Natural killer cell (primary cell): ENCODE measurements at regions of chr1 and their contacts with region 1.

Region 1: GRCh38 chr1:26787706-26788514 is at the start of gene PIGV:
- DNase-seq: peak; percentile 90 to 95
- ATAC-seq: peak; percentile 65 to 87 (median 70)
- H3K4me3 ChIP-seq: peak within 1 kb of the TSS; percentile 79
- H3K4me3 Mint-ChIP-seq: peak within 1 kb of the TSS; percentile 100
- H3K27ac ChIP-seq: peak within 1 kb of the TSS; percentile 96
- H3K27ac Mint-ChIP-seq: peak within 1 kb of the TSS; percentile 100
- H3K4me1 ChIP-seq: peaks cover 63% of the 10 kb centered on the region
- H3K4me1 Mint-ChIP-seq: peaks cover 74 to 84% of the 10 kb centered on the region in 2 donors
- H3K27me3 ChIP-seq: no peaks in the 10 kb centered on the region
- H3K27me3 Mint-ChIP-seq: no peaks in the 10 kb centered on the region
- CTCF ChIP-seq: no peak
- total RNA-seq, gene PIGV: 23.1 to 35.2 (median 30.3) TPM

Region 2: DNA sequence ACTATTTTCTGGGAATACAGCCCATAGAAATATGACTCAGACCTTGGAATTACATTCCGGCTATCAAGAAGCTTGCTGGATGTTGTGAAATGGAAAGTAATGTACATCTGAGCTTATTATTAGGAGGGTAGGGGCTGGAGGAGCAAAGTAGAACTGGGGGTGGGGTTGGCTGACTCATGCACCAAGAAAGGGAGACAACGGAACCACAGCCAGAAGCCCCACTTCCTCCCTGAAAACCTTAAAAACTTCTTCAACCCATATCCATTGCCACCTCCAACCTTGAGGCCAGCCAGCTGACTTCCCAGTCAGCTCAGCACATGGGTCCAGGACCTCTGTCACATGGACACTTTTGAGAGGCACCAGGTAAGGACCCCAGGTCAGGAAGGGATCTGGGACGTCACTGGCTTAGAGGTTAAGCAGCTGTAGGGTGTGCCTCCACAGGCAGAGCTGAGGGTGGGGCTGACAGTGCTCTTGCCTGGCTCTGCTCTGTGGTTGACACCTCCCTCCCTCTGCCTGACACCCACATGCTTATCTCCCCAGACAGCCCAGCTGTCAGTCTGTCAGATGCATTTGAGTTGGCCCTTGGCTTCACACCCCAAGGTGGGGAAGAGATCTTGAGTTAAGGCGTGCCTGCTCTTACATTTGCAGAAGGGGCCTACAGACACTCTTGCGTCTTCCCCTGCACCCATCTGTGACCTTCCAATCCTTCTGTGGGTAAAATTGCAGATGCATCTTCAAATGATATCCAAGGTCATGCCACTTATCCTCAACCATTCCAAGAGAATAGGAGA is 409.6 kb before region 1 on chr1:
- intact Hi-C with region 1: loop called (anchors 10 kb)
- DNase-seq: peak; percentile 85 to 93
- ATAC-seq: peak; percentile 89 to 97 (median 93)
- H3K4me3 ChIP-seq: peak overlapping the region; percentile 0
- H3K4me3 Mint-ChIP-seq: peak overlapping the region; percentile 92
- H3K27ac ChIP-seq: peak overlapping the region; percentile 69
- H3K27ac Mint-ChIP-seq: peak overlapping the region; percentile 82 to 93
- H3K4me1 ChIP-seq: peaks cover 64% of the 10 kb centered on the region
- H3K4me1 Mint-ChIP-seq: peaks cover 62 to 68% of the 10 kb centered on the region in 2 donors
- H3K27me3 ChIP-seq: no peaks in the 10 kb centered on the region
- H3K27me3 Mint-ChIP-seq: peaks cover 6% of the 10 kb centered on the region in 2 donors
- CTCF ChIP-seq: no peak

Region 3: DNA sequence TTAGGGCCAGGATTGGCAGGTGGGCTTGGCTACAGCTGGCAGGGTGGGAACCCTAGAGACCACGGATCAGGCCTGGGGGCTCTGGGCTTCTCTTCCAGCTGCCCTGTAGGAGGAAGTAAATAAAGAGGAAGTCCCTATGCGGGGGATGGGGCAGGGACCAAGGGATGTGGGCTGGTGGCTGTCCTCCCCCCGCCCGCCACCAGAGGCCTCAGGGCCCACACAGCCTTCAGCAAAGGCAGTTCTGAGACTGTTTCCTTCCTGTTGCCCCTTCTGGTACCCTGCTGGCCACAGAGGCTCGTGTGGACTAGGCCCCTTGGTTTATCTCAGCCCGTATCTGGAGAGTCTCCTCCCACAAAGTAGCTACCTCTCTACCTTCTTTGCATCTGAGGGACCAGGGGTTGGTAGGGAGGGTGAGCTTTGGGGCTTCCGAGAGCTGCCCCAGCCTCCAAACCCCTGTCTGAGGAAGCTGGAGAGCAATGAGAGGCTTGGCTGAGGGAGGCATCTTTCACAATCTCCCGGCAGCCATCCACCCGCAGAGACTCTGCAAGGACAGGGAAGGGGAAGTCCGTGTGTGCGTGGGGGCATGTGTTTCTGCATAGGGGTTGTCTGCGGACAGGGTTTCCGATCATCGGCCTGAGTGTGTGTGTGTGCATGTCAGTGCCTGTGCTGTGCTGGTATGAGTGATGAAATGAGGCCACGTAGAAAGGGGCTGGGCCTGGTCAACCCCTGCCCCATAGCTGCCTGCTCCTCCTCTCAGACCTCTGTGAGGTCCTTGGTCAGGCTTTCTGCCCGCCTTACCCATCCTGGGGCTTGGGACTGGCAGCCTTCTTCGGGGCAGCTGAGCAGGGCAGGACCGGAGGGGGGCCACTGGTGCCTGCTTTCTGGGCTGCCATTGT is 245.8 kb before region 1 on chr1:
- intact Hi-C with region 1: loop called (anchors 2 kb)
- DNase-seq: peak; percentile 78 to 86
- ATAC-seq: peak; percentile 65 to 84 (median 77)
- H3K4me3 ChIP-seq: peak overlapping the region; percentile 23
- H3K4me3 Mint-ChIP-seq: peak overlapping the region; percentile 87
- H3K27ac ChIP-seq: peak overlapping the region; percentile 98
- H3K27ac Mint-ChIP-seq: peak overlapping the region; percentile 99
- H3K4me1 ChIP-seq: peaks cover 98% of the 10 kb centered on the region
- H3K4me1 Mint-ChIP-seq: peaks cover 79 to 84% of the 10 kb centered on the region in 2 donors
- H3K27me3 ChIP-seq: no peaks in the 10 kb centered on the region
- H3K27me3 Mint-ChIP-seq: no peaks in the 10 kb centered on the region
- CTCF ChIP-seq: peak; percentile 52

Region 4: GRCh38 chr1:26677306-26678115 is 110.4 kb before region 1 on chr1:
- intact Hi-C with region 1: loop called (anchors 1 kb)
- DNase-seq: peak; percentile 22 to 84
- ATAC-seq: peak; percentile 88 to 99 (median 98)
- H3K4me3 ChIP-seq: no peak overlapping the region
- H3K4me3 Mint-ChIP-seq: peak overlapping the region; percentile 71
- H3K27ac ChIP-seq: peak overlapping the region; percentile 35
- H3K27ac Mint-ChIP-seq: peak overlapping the region; percentile 30 to 85
- H3K4me1 ChIP-seq: peaks cover 6% of the 10 kb centered on the region
- H3K4me1 Mint-ChIP-seq: peaks cover 11 to 12% of the 10 kb centered on the region in 2 donors
- H3K27me3 ChIP-seq: no peaks in the 10 kb centered on the region
- H3K27me3 Mint-ChIP-seq: no peaks in the 10 kb centered on the region
- CTCF ChIP-seq: peak; percentile 39

Region 5: DNA sequence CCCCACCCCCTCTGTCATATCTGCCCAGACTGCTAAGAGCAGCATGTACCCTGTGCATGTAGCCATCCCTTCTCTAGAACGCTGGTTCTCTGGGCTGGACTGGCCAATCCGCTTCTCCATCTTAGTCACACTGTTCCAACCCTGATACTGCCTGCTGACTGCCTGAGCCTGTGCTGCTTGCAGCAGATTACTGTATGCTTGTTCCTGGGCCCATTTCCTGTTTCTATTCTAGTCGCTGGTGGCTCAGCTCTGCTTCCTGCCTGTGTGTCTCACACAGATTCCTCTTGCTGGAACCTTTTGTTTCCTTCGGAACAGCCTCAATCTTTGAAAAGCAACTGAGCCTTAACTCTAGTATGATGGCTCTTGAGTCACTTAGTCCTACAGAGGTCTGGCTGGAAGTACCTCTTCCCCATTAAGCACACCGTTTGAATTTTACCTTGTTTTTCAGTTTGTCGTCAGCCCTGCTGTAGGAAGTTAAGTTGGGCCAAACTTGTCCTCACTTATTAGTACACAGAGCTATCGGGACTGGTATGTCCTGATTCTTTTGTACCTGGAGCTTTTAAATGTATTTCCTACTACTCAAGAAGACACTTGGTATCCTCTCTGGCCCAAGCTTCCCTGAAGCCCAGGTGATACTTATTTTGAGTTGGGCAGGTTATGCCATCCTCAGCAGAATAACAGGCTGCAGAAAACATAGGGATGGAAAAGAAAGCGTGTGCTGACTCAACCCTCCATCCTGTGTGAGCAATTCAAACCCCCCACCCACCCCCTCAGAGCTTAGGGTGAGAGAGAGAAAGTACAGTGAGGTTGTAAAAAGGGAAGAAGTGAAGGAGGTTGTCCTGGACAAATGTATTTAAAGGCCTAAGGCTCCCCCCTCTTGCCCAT is 43.6 kb before region 1 on chr1:
- intact Hi-C with region 1: loop called (anchors 1 kb)
- DNase-seq: peak; percentile 59 to 91
- ATAC-seq: peak; percentile 94 to 98 (median 96)
- H3K4me3 ChIP-seq: no peak overlapping the region
- H3K4me3 Mint-ChIP-seq: peak overlapping the region; percentile 70
- H3K27ac ChIP-seq: peak overlapping the region; percentile 76
- H3K27ac Mint-ChIP-seq: peak overlapping the region; percentile 92 to 93
- H3K4me1 ChIP-seq: peaks cover 47% of the 10 kb centered on the region
- H3K4me1 Mint-ChIP-seq: peaks cover 66 to 68% of the 10 kb centered on the region in 2 donors
- H3K27me3 ChIP-seq: no peaks in the 10 kb centered on the region
- H3K27me3 Mint-ChIP-seq: no peaks in the 10 kb centered on the region
- CTCF ChIP-seq: no peak

Region 6: GRCh38 chr1:26820784-26821269 is 32.9 kb after region 1 on chr1:
- intact Hi-C with region 1: no loop called
- DNase-seq: peak in 1 of 2 donors; percentile 77
- ATAC-seq: peak; percentile 97 to 99 (median 99)
- H3K4me3 ChIP-seq: no peak overlapping the region
- H3K4me3 Mint-ChIP-seq: peak overlapping the region; percentile 74
- H3K27ac ChIP-seq: peak overlapping the region; percentile 56
- H3K27ac Mint-ChIP-seq: peak overlapping the region; percentile 69 to 80
- H3K4me1 ChIP-seq: peaks cover 23% of the 10 kb centered on the region
- H3K4me1 Mint-ChIP-seq: peaks cover 14 to 20% of the 10 kb centered on the region in 2 donors
- H3K27me3 ChIP-seq: no peaks in the 10 kb centered on the region
- H3K27me3 Mint-ChIP-seq: no peaks in the 10 kb centered on the region
- CTCF ChIP-seq: peak; percentile 44

Region 7: GRCh38 chr1:26921540-26922430 is 133.9 kb after region 1 on chr1 and contains the start of gene NUDC:
- intact Hi-C with region 1: loop called (anchors 1 kb)
- DNase-seq: peak; percentile 93 to 98
- ATAC-seq: peak; percentile 92 to 98 (median 94)
- H3K4me3 ChIP-seq: peak within 1 kb of the TSS; percentile 69
- H3K4me3 Mint-ChIP-seq: peak within 1 kb of the TSS; percentile 97
- H3K27ac ChIP-seq: peak within 1 kb of the TSS; percentile 84
- H3K27ac Mint-ChIP-seq: peak within 1 kb of the TSS; percentile 93 to 97
- H3K4me1 ChIP-seq: peaks cover 18% of the 10 kb centered on the region
- H3K4me1 Mint-ChIP-seq: peaks cover 34 to 35% of the 10 kb centered on the region in 2 donors
- H3K27me3 ChIP-seq: no peaks in the 10 kb centered on the region
- H3K27me3 Mint-ChIP-seq: no peaks in the 10 kb centered on the region
- CTCF ChIP-seq: no peak
- total RNA-seq, gene NUDC: 43.6 to 46.6 (median 43.7) TPM